Activated CD8-positive, alpha-beta T cell treated with anti-CD3 and anti-CD28 coated beads for 36 hours (primary cell): ENCODE measurements at regions of chr20 and their contacts with region 1.

Region 1: DNA sequence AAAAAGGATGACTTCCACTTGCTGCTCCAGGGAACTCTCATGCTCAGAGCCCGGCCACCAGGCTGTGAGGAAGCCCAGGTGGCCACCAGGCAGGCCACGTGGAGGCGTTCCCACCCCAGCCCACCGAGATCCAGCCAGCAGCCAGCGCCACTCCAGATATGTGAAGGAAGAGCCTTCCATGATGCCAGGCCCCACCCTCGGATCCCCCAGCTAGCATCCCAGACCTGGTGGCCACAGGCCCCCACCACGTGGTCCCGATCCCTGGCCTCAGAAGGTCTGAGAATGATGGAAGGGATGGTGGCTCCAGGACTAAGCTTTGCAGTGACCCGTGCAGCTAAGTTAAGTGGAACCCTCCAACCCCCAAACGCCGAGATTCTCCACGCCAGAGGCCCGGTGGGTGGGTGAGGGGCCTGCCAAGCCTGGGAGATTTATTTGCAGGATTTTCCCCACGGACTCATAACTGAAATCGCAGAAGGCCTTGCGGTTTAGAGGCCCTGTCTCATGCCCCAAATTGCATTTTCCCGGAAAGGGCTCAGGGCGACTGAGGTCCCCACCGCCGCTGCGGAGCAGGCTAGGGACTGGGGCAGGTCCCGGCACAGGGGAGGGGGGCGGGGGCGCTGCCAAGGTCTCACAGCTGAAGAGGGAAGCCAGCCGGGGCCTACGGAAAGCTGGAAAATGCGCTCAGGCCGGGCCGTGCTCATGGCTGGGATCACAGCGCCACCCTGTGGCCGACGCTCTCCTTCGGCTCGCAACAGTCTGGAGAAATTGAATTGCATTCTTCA is 31.1 kb upstream of the CST7 start:
- DNase-seq: peak; percentile 67
- ATAC-seq: peak; percentile 68
- H3K4me3 Mint-ChIP-seq: no peak overlapping the region
- H3K27ac Mint-ChIP-seq: no peak overlapping the region
- H3K4me1 Mint-ChIP-seq: peaks cover 6% of the 10 kb centered on the region
- H3K27me3 Mint-ChIP-seq: peaks cover 2% of the 10 kb centered on the region
- CTCF ChIP-seq: peak; percentile 92

Region 2: GRCh38 chr20:24783631-24784492 is 134.1 kb before region 1 on chr20:
- CTCF ChIA-PET with region 1: interaction called, 16 read pairs
- POLR2A ChIA-PET with region 1: no interaction called
- intact Hi-C with region 1: no loop called
- DNase-seq: peak; percentile 33
- ATAC-seq: no peak
- H3K4me3 Mint-ChIP-seq: no peak overlapping the region
- H3K27ac Mint-ChIP-seq: no peak overlapping the region
- H3K4me1 Mint-ChIP-seq: no peaks in the 10 kb centered on the region
- H3K27me3 Mint-ChIP-seq: peaks cover 4% of the 10 kb centered on the region
- CTCF ChIP-seq: no peak

Region 3: GRCh38 chr20:24906806-24907205 is 11.2 kb before region 1 on chr20:
- CTCF ChIA-PET with region 1: no interaction called
- POLR2A ChIA-PET with region 1: no interaction called
- intact Hi-C with region 1: no loop called
- DNase-seq: no peak
- ATAC-seq: no peak
- H3K4me3 Mint-ChIP-seq: no peak overlapping the region
- H3K27ac Mint-ChIP-seq: no peak overlapping the region
- H3K4me1 Mint-ChIP-seq: no peaks in the 10 kb centered on the region
- H3K27me3 Mint-ChIP-seq: peaks cover 1% of the 10 kb centered on the region
- CTCF ChIP-seq: no peak

Region 4: GRCh38 chr20:24934101-24934661 is 16.2 kb after region 1 on chr20:
- CTCF ChIA-PET with region 1: interaction called, 19 read pairs
- POLR2A ChIA-PET with region 1: no interaction called
- intact Hi-C with region 1: no loop called
- DNase-seq: no peak
- ATAC-seq: no peak
- H3K4me3 Mint-ChIP-seq: no peak overlapping the region
- H3K27ac Mint-ChIP-seq: no peak overlapping the region
- H3K4me1 Mint-ChIP-seq: peaks cover 30% of the 10 kb centered on the region
- H3K27me3 Mint-ChIP-seq: no peaks in the 10 kb centered on the region
- CTCF ChIP-seq: no peak

Region 5: GRCh38 chr20:24978513-24978912 is 60.5 kb after region 1 on chr20:
- CTCF ChIA-PET with region 1: no interaction called
- POLR2A ChIA-PET with region 1: no interaction called
- intact Hi-C with region 1: loop called (anchors 10 kb)
- DNase-seq: no peak
- ATAC-seq: no peak
- H3K4me3 Mint-ChIP-seq: no peak overlapping the region
- H3K27ac Mint-ChIP-seq: no peak overlapping the region
- H3K4me1 Mint-ChIP-seq: peaks cover 25% of the 10 kb centered on the region
- H3K27me3 Mint-ChIP-seq: no peaks in the 10 kb centered on the region
- CTCF ChIP-seq: no peak

Region 6: GRCh38 chr20:25032478-25033280 is 114.7 kb after region 1 on chr20:
- CTCF ChIA-PET with region 1: no interaction called
- POLR2A ChIA-PET with region 1: no interaction called
- intact Hi-C with region 1: no loop called
- DNase-seq: no peak
- ATAC-seq: no peak
- H3K4me3 Mint-ChIP-seq: no peak overlapping the region
- H3K27ac Mint-ChIP-seq: no peak overlapping the region
- H3K4me1 Mint-ChIP-seq: peaks cover 28% of the 10 kb centered on the region
- H3K27me3 Mint-ChIP-seq: no peaks in the 10 kb centered on the region
- CTCF ChIP-seq: no peak